Heart right ventricle (tissue), 16 donors: ENCODE measurements at regions of chr15 and their contacts with region 1.

Region 1: DNA sequence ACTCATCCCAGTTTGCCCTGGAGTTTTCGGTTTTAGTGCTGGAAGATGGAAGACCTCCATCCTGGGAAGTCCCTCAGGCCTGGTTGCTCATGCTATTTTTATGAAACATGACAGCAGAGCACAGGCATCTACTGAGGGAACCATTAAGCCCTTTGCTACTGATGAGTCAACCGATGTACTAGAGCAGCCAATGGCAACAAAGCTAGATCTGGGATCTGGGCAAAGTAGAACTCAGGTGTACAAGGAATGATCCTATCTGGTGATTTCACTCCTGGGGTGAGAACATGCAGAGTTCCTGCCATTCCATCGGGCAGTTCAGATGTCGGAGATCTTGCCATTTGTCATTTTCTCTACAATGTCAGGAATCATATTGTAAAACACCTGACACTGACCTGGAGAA is 166.2 kb upstream of the NSMCE3 start:
- DNase-seq: no peak
- ATAC-seq: no peak
- H3K4me3 ChIP-seq: no peak overlapping the region
- H3K27ac ChIP-seq: no peak overlapping the region
- H3K4me1 ChIP-seq: no peaks in the 10 kb centered on the region
- H3K27me3 ChIP-seq: peaks cover 0 to 7% (median 0%) of the 10 kb centered on the region in 7 donors
- CTCF ChIP-seq: no peak

Region 2: GRCh38 chr15:29376590-29376989 is 59.2 kb before region 1 on chr15:
- intact Hi-C with region 1: loop called in 1 of 10 experiments (anchors 10 kb)
- DNase-seq: no peak
- ATAC-seq: no peak
- H3K4me3 ChIP-seq: no peak overlapping the region
- H3K27ac ChIP-seq: no peak overlapping the region
- H3K4me1 ChIP-seq: no peaks in the 10 kb centered on the region
- H3K27me3 ChIP-seq: peaks cover 0 to 8% (median 0%) of the 10 kb centered on the region in 7 donors
- CTCF ChIP-seq: no peak